ENCODE measurements at regions of chr18 and their contacts with region 1.

Region 1: GRCh38 chr18:74342416-74343043 is 26.9 kb downstream of the C18orf63 start:
- DNase-seq: peak; percentile 72
- ATAC-seq: no peak
- H3K4me3 ChIP-seq: no peak overlapping the region
- H3K4me3 Mint-ChIP-seq: no peak overlapping the region
- H3K27ac ChIP-seq: no peak overlapping the region
- H3K27ac Mint-ChIP-seq: peak overlapping the region; percentile 64
- H3K4me1 ChIP-seq: peaks cover 0 to 8% of the 10 kb centered on the region in 2 donors
- H3K4me1 Mint-ChIP-seq: peaks cover 22% of the 10 kb centered on the region
- H3K27me3 ChIP-seq: no peaks in the 10 kb centered on the region
- H3K27me3 Mint-ChIP-seq: no peaks in the 10 kb centered on the region
- CTCF ChIP-seq: peak; percentile 93

Region 2: DNA sequence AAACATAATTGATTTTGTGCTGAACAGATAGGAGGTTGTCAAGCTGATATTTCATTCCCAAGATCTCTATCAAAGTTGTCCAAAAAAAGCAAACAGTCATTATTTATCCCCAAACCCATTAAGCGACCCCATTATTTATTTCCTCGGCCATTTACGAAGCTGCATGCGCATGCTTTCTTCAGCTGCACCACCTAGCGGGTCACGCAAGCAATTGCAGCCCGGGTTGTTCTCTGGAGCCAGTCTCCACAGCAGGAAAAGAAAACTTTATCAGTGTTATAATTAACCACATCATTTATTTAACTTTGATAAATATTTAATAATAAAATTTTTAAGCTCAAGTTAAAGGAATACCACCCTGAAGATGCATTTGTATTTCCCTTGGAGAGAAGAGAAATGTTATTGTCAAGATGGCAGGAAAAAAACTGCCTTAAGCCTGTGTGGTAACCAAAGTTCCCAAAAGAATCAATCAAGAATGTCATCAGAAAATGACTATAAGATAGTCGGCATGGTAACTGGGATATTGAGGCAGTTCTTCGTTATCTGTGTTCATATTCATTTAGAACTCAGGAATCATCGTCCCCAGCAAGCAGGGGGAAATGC is 499.6 kb before region 1 on chr18:
- CTCF ChIA-PET with region 1: interaction called, 5 read pairs
- POLR2A ChIA-PET with region 1: no interaction called
- intact Hi-C with region 1: loop called (anchors 5 kb)
- DNase-seq: peak; percentile 57
- ATAC-seq: peak; percentile 71
- H3K4me3 ChIP-seq: peak overlapping the region in 1 of 5 experiments; percentile 34
- H3K4me3 Mint-ChIP-seq: peak overlapping the region; percentile 57
- H3K27ac ChIP-seq: no peak overlapping the region
- H3K27ac Mint-ChIP-seq: no peak overlapping the region
- H3K4me1 ChIP-seq: no peaks in the 10 kb centered on the region
- H3K4me1 Mint-ChIP-seq: peaks cover 3% of the 10 kb centered on the region
- H3K27me3 ChIP-seq: peaks cover 0 to 4% (median 0%) of the 10 kb centered on the region in 4 experiments
- H3K27me3 Mint-ChIP-seq: peaks cover 5% of the 10 kb centered on the region
- CTCF ChIP-seq: peak; percentile 98

Region 3: DNA sequence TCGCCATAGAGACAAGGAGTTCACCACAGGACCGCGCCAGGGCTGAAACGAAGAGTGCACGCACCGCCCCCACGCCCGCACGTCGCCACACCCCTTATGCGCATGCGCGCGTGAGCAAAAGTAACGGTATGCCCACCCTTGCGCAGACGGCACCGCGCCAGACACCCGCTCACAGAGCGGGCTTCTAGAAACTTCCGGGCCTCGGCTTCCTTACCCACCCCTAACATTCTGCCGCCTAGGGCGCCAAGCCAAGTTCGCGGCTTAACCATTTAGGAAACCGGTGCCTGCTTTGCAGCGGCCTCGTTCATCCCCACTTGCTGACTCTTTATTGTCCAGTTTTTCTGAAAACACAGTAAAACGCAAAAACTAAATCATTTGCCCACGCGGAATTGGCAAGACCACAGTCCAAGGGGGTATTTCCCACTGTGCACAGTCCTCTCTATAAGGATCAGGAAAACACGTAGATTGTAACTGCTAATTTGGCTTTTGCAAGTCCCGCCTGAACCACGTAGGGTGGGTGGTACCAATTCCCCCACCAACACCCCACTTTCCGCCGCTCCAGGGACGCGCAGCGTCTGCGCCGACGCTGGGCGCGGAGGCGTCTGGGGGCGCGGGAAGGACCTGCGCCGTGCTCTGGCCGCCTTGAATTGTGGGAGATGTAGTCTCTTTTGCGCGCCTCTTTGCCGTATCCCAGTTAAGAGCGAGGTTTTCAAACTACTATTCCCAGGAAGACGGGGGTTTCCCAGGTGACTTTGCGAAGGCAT is 194.6 kb before region 1 on chr18 and contains the starts of genes FBXO15 and TIMM21:
- CTCF ChIA-PET with region 1: no interaction called
- POLR2A ChIA-PET with region 1: no interaction called
- intact Hi-C with region 1: loop called (anchors 2 kb)
- DNase-seq: peak; percentile 98
- ATAC-seq: peak; percentile 84
- H3K4me3 ChIP-seq: peak within 1 kb of the TSS; percentile 75 to 99 (median 89)
- H3K4me3 Mint-ChIP-seq: peak within 1 kb of the TSS; percentile 94
- H3K27ac ChIP-seq: peak within 1 kb of the TSS; percentile 95 to 99
- H3K27ac Mint-ChIP-seq: peak within 1 kb of the TSS; percentile 100
- H3K4me1 ChIP-seq: peaks cover 15 to 21% of the 10 kb centered on the region in 2 donors
- H3K4me1 Mint-ChIP-seq: peaks cover 36% of the 10 kb centered on the region
- H3K27me3 ChIP-seq: no peaks in the 10 kb centered on the region
- H3K27me3 Mint-ChIP-seq: peaks cover 7% of the 10 kb centered on the region
- CTCF ChIP-seq: peak; percentile 1
- total RNA-seq, gene FBXO15: 3.7 and 4.1 TPM in 2 replicates
- total RNA-seq, gene TIMM21: 24.3 and 25.0 TPM in 2 replicates

Region 4: DNA sequence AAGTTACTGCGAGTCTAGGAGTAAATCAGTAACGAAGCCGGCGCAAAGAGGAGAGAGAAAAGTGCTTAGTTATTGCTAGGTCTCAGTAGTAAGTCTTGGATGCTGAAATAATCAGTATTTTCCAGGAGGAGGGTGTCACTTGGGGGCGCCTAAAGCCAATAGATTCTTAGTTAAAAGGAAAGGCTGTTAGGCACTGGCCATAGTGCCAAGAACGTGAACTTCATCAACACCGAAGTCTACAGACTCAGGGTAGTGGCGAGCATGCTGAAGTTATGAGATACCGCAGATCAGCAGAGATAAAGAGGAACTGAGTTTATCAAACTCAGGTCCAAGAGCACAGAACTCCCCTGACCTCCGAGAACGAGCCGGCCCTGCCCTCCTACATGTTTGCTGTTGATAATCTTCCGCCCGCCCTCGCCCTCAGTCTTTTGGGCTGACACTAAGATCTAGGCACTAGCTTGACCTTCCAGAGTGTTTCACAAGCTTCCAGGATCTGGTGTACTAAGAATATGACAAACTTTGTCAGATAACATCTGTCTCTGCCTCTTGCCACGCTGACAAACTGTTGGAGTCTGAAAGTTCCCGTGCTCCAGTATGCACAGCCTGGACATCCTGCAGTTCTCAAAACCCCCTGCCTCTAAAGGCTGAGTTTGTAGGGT is 100.0 kb before region 1 on chr18:
- CTCF ChIA-PET with region 1: interaction called, 36 read pairs
- POLR2A ChIA-PET with region 1: no interaction called
- intact Hi-C with region 1: loop called (anchors 1 kb)
- DNase-seq: no peak
- ATAC-seq: no peak
- H3K4me3 ChIP-seq: no peak overlapping the region
- H3K4me3 Mint-ChIP-seq: no peak overlapping the region
- H3K27ac ChIP-seq: no peak overlapping the region
- H3K27ac Mint-ChIP-seq: no peak overlapping the region
- H3K4me1 ChIP-seq: peaks cover 0 to 16% of the 10 kb centered on the region in 2 donors
- H3K4me1 Mint-ChIP-seq: peaks cover 42% of the 10 kb centered on the region
- H3K27me3 ChIP-seq: no peaks in the 10 kb centered on the region
- H3K27me3 Mint-ChIP-seq: peaks cover 8% of the 10 kb centered on the region
- CTCF ChIP-seq: no peak

Region 5: GRCh38 chr18:74310411-74310810 is 32.1 kb before region 1 on chr18:
- CTCF ChIA-PET with region 1: interaction called, 22 read pairs
- POLR2A ChIA-PET with region 1: no interaction called
- intact Hi-C with region 1: no loop called
- DNase-seq: peak; percentile 65
- ATAC-seq: no peak
- H3K4me3 ChIP-seq: no peak overlapping the region
- H3K4me3 Mint-ChIP-seq: no peak overlapping the region
- H3K27ac ChIP-seq: no peak overlapping the region
- H3K27ac Mint-ChIP-seq: no peak overlapping the region
- H3K4me1 ChIP-seq: peaks cover 0 to 3% of the 10 kb centered on the region in 2 donors
- H3K4me1 Mint-ChIP-seq: no peaks in the 10 kb centered on the region
- H3K27me3 ChIP-seq: peaks cover 0 to 4% (median 0%) of the 10 kb centered on the region in 4 experiments
- H3K27me3 Mint-ChIP-seq: peaks cover 22% of the 10 kb centered on the region
- CTCF ChIP-seq: no peak

Region 6: DNA sequence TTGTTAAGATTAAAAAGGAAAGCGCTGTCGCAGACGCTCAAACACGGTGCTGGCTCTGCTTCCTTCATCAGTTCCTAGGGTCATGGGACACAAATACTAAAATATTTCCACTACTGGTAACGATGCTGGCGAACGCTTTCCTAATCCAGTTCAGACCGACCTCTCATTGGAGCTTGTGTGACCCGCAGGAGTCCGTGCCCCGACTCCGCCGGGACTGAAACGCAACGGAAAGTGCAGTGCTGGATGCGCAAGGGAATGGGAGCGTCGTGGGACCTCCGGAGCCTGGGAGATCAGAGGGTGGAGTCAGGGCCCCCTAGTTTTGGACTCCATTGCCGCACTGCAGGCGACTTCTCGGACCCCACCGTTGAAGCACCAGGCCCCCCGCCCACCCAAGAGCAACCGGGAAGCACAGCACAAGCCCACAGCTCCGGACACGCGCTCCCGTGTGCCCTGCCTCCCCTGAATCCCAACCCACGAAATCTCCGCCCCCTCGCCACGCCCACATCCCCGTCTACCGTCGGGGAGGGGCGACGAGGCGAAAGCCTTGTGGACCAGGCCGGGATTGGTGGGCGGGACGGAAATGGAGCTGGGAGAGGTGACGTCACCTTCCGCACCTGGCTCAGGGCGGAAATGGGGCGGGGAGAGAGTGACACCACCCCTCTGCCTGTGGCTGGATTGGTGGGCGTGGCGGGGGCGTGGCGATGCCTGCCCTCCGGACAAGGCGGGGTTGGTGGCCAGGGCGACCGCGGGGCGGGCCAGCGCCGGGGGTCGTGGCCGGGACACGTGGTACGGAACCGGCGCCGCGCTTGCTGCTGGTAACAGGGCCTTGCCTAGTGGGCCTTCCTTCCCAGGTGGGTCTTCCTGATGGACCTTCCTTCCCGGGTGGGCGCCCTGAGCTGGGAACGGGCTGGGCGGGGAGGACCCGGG is 153.3 kb after region 1 on chr18 and contains the start of gene CNDP2:
- CTCF ChIA-PET with region 1: interaction called, 23 read pairs
- POLR2A ChIA-PET with region 1: no interaction called
- intact Hi-C with region 1: loop called (anchors 5 kb)
- DNase-seq: peak; percentile 99
- ATAC-seq: peak; percentile 79
- H3K4me3 ChIP-seq: peak within 1 kb of the TSS; percentile 19 to 95 (median 81)
- H3K4me3 Mint-ChIP-seq: peak within 1 kb of the TSS; percentile 95
- H3K27ac ChIP-seq: peak within 1 kb of the TSS; percentile 85 to 91
- H3K27ac Mint-ChIP-seq: peak within 1 kb of the TSS; percentile 94
- H3K4me1 ChIP-seq: peaks cover 38% of the 10 kb centered on the region in 2 donors
- H3K4me1 Mint-ChIP-seq: peaks cover 43% of the 10 kb centered on the region
- H3K27me3 ChIP-seq: no peaks in the 10 kb centered on the region
- H3K27me3 Mint-ChIP-seq: no peaks in the 10 kb centered on the region
- CTCF ChIP-seq: no peak
- total RNA-seq, gene CNDP2: 182 and 196 TPM in 2 replicates

Measured in B cell (primary cell).